Heart left ventricle (tissue), 16 donors: ENCODE measurements at regions of chrX and their contacts with region 1.

Region 1: DNA sequence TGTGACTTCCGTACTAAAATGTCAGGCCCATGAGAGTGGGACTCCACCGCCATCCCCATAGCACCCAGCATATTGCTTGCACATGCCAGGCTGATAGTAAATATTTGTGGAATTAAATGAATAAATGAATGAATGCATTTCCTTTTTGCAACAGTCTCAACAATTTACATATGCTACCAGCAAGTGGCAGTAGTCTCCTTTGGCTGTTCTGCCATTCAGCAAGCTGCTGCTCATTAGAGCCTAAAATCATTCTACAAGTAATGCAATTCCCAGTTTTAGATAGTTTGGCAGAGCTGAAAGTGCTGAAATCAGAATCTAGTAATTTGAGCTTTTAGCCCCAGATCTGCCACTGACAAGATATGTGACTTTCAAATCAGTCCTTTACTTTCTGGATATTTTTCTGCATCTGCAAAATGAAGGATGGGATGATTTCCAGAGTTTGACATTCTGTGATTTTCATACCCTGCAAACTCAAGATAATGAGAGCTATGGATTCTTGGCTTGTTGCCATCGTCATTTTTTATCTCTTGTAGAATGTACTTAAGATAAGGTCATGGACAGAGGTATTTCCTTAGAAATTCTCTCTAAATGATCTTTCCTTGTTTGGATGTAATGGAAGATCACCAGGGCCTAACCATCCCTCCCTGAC is 35.7 kb upstream of the INTS6L start:
- DNase-seq: peak in 2 of 5 donors; percentile 5 to 14
- ATAC-seq: no peak
- H3K4me3 ChIP-seq: no peak overlapping the region
- H3K27ac ChIP-seq: no peak overlapping the region
- H3K4me1 ChIP-seq: no peaks in the 10 kb centered on the region
- H3K27me3 ChIP-seq: peaks cover 0 to 5% (median 0%) of the 10 kb centered on the region in 9 donors
- CTCF ChIP-seq: peak; percentile 32 to 65 (median 48)
- POLR2A ChIP-seq: no peak

Region 2: DNA sequence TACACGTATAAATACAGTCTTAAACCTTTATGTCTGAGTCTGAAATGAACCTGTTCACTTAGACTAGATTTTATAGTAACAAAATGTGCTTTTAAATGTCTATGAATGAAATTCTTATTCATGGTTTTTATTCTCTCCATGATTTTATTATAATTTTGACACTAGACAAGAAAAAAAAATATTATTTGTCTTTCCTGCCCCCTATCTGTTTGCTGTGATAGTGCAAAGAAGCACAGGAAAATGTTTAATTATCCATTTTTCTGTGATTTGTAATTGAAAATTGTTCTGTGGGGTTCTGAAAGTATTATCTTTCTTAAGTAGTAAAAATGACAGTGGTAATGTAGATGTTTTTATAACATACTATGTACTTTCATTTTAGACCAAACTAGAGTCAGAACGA is 87.7 kb after region 1 on chrX:
- intact Hi-C with region 1: loop called in 8 of 10 experiments (anchors 5 to 10 kb)
- DNase-seq: no peak
- ATAC-seq: no peak
- H3K4me3 ChIP-seq: no peak overlapping the region
- H3K27ac ChIP-seq: no peak overlapping the region
- H3K4me1 ChIP-seq: no peaks in the 10 kb centered on the region
- H3K27me3 ChIP-seq: no peaks in the 10 kb centered on the region
- CTCF ChIP-seq: peak in 11 of 12 donors; percentile 18 to 52 (median 34)
- POLR2A ChIP-seq: no peak

Region 3: DNA sequence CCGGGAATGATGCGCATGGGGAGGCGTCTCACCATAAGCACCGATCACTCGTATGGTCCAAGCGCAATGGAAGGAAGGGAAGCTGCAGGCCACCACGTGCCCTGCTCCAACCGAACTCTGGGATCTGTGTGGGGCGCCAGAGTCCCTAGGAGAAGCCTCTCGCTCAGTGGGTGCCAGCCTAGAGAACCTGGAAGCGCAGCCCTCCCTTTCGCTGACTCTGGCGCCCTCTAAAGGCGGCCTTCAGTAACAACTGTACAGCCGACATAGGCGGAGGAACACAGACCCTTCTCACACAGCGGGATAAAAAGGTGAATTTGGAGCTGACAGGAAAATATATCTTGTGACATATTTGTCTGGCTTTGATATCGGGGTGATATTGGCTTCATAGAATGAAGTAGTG is 111.7 kb after region 1 on chrX:
- intact Hi-C with region 1: loop called in 2 of 10 experiments (anchors 2 to 10 kb)
- DNase-seq: peak in 4 of 5 donors; percentile 18 to 38 (median 28)
- ATAC-seq: peak in 3 of 4 donors; percentile 28 to 59 (median 52)
- H3K4me3 ChIP-seq: no peak overlapping the region
- H3K27ac ChIP-seq: no peak overlapping the region
- H3K4me1 ChIP-seq: no peaks in the 10 kb centered on the region
- H3K27me3 ChIP-seq: peaks cover 0 to 19% (median 0%) of the 10 kb centered on the region in 9 donors
- CTCF ChIP-seq: peak in 11 of 12 donors; percentile 22 to 63 (median 47)
- POLR2A ChIP-seq: no peak

Region 4: DNA sequence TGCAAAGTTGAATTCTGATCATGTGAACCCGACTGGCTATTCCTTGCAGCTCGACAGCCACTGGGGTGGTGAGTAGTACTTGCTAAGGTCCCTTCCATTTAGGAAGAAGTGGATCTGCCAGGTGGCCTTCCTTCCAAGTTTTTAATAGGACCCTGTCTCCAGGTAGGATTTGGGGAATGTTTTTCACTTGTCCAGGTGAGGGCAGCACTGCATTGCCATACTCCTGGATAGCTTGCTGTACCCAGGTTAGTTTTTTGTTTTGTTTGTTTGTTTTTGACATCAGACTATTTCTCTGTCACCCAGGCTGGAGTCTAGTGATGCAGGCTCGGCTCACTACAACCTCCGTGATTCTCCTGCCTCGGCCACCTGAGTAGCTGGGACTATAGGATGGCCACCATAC is 438.6 kb after region 1 on chrX:
- intact Hi-C with region 1: loop called in 1 of 10 experiments (anchors 10 kb)
- DNase-seq: no peak
- ATAC-seq: no peak
- H3K4me3 ChIP-seq: no peak overlapping the region
- H3K27ac ChIP-seq: no peak overlapping the region
- H3K4me1 ChIP-seq: no peaks in the 10 kb centered on the region
- H3K27me3 ChIP-seq: peaks cover 0 to 13% (median 0%) of the 10 kb centered on the region in 9 donors
- CTCF ChIP-seq: no peak
- POLR2A ChIP-seq: no peak